ENCODE measurements at regions of chr5 and their contacts with region 1.

Region 1: GRCh38 chr5:18892629-18893028 is 1095.4 kb downstream of the CDH18 start:
- DNase-seq: no peak
- ATAC-seq: no peak
- H3K4me3 ChIP-seq: no peak overlapping the region
- H3K4me3 Mint-ChIP-seq: no peak overlapping the region
- H3K27ac ChIP-seq: no peak overlapping the region
- H3K27ac Mint-ChIP-seq: no peak overlapping the region
- H3K4me1 ChIP-seq: no peaks in the 10 kb centered on the region
- H3K4me1 Mint-ChIP-seq: no peaks in the 10 kb centered on the region
- H3K27me3 ChIP-seq: no peaks in the 10 kb centered on the region
- H3K27me3 Mint-ChIP-seq: no peaks in the 10 kb centered on the region
- CTCF ChIP-seq: no peak

Region 2: DNA sequence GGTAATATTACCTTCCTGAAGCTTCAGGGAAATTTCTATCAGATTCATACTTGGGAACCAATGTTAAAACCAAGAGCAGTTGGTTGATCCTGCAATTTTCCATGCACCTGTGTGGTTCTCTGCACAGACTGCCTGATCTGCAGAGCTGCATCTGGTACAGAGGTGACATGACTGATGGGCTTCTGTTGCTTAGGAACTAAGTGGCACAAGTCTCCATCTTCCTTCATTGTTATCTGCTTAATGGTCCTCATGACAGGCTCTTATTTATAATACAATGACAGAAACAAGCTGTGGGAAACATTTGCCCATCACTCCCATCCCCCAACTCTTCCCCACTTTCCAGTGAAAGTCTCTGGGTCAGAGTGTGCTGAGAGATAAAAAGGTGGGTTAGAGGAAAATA is 459.3 kb before region 1 on chr5:
- intact Hi-C with region 1: loop called (anchors 5 kb)
- DNase-seq: no peak
- ATAC-seq: no peak
- H3K4me3 ChIP-seq: no peak overlapping the region
- H3K4me3 Mint-ChIP-seq: no peak overlapping the region
- H3K27ac ChIP-seq: no peak overlapping the region
- H3K27ac Mint-ChIP-seq: no peak overlapping the region
- H3K4me1 ChIP-seq: no peaks in the 10 kb centered on the region
- H3K4me1 Mint-ChIP-seq: no peaks in the 10 kb centered on the region
- H3K27me3 ChIP-seq: no peaks in the 10 kb centered on the region
- H3K27me3 Mint-ChIP-seq: no peaks in the 10 kb centered on the region
- CTCF ChIP-seq: no peak